ENCODE measurements at regions of chr3 and their contacts with region 1.

Region 1: DNA sequence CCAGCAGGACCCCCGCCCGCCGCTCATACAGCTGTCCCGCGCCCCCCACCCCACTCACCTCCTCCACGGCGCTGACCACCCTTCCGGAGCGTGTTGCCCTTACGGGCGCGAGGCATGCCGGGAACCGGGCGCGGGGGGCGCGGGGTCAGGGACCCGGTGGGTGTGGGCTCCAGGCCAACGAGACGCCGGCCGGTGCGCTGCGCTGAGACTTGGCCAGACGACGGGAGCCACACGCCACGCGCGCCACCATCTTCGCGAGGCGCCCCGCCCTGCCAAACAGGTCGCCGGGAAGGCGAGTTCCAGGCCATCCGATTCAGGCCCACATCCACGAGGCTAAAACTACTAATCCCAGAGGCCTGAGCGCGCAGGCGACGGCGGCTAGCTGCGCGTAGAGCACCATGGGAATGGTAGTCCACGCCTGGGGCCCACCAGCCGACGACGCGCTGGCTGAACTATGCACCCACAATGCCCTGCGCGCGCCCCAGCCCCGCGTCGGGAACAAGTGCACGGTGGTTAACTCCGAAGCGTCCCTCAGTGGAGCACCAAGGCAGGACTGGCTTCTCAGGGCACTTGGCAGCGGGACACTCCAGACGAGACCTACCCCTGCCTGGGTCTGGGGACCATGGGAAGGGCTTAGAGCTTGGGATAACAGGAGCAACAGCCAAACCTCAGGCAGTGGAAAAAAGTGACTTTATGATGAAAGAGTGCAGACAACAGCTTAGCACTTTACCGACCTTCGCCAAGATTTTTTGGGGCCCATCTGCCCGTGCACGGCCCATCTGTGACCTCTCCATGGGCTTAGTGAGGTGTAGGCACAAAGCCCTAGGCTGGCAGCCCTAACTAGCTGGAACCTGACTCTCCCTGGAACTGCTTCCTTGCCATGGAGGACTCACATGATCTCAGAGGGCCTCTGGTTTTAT is at the start of gene IFRD2:
- DNase-seq: peak; percentile 91
- H3K4me3 ChIP-seq: peak within 1 kb of the TSS; percentile 80
- H3K27ac ChIP-seq: peak within 1 kb of the TSS; percentile 61
- H3K27me3 ChIP-seq: no peaks in the 10 kb centered on the region
- CTCF ChIP-seq: no peak
- polyA plus RNA-seq, gene IFRD2: 19.3 and 20.6 TPM in 2 replicates

Region 2: DNA sequence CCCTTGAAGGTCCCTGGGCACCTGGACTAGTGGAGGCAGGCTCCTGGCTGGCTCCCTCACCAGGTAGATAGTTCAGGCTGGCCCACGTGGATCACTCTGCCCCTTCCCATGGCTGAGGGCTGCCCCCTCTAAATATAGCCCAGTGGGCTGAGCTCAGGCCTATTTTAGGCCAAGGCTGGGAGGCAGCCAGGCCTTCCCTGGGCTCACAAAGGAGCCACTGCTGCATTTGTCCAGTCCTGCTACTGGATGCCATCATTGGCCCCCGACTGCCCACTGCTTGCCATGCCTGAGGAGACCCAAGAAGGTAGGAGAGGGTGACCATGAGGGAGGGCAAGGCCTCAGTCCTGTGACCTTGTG is 13.6 kb before region 1 on chr3 and contains the start of gene LSMEM2:
- CTCF ChIA-PET with region 1: interaction called, 11 read pairs
- POLR2A ChIA-PET with region 1: interaction called, 7 read pairs
- DNase-seq: no peak
- H3K4me3 ChIP-seq: no peak within 1 kb of the TSS
- H3K27ac ChIP-seq: no peak within 1 kb of the TSS
- H3K27me3 ChIP-seq: peaks cover 19% of the 10 kb centered on the region
- CTCF ChIP-seq: no peak
- polyA plus RNA-seq, gene LSMEM2: not detected in 2 replicates

Region 3: GRCh38 chr3:50840983-50841489 is 548.6 kb after region 1 on chr3:
- CTCF ChIA-PET with region 1: no interaction called
- POLR2A ChIA-PET with region 1: no interaction called
- DNase-seq: no peak
- H3K4me3 ChIP-seq: no peak overlapping the region
- H3K27ac ChIP-seq: no peak overlapping the region
- H3K27me3 ChIP-seq: no peaks in the 10 kb centered on the region
- CTCF ChIP-seq: no peak